Activated CD8-positive, alpha-beta memory T cell treated with anti-CD3 and anti-CD28 coated beads, Interleukin-2, amount 10 ng/mL, durations not matched to agents 7 days and 5 days (primary cell): ENCODE measurements at regions of chr14 and their contacts with region 1.

Region 1: GRCh38 chr14:34722717-34723545 is 8.5 kb upstream of the CFL2 start:
- DNase-seq: peak; percentile 48
- ATAC-seq: no peak
- H3K4me3 Mint-ChIP-seq: no peak overlapping the region
- H3K27ac Mint-ChIP-seq: no peak overlapping the region
- H3K4me1 Mint-ChIP-seq: peaks cover 5% of the 10 kb centered on the region
- H3K27me3 Mint-ChIP-seq: peaks cover 16% of the 10 kb centered on the region

Region 2: GRCh38 chr14:34548472-34548981 is 174.4 kb before region 1 on chr14:
- CTCF ChIA-PET with region 1: no interaction called
- DNase-seq: no peak
- ATAC-seq: no peak
- H3K4me3 Mint-ChIP-seq: no peak overlapping the region
- H3K27ac Mint-ChIP-seq: no peak overlapping the region
- H3K4me1 Mint-ChIP-seq: peaks cover 10% of the 10 kb centered on the region
- H3K27me3 Mint-ChIP-seq: no peaks in the 10 kb centered on the region

Region 3: GRCh38 chr14:34668111-34668510 is 54.8 kb before region 1 on chr14:
- CTCF ChIA-PET with region 1: interaction called, 30 read pairs
- DNase-seq: no peak
- ATAC-seq: no peak
- H3K4me3 Mint-ChIP-seq: no peak overlapping the region
- H3K27ac Mint-ChIP-seq: no peak overlapping the region
- H3K4me1 Mint-ChIP-seq: peaks cover 7% of the 10 kb centered on the region
- H3K27me3 Mint-ChIP-seq: peaks cover 3% of the 10 kb centered on the region

Region 4: DNA sequence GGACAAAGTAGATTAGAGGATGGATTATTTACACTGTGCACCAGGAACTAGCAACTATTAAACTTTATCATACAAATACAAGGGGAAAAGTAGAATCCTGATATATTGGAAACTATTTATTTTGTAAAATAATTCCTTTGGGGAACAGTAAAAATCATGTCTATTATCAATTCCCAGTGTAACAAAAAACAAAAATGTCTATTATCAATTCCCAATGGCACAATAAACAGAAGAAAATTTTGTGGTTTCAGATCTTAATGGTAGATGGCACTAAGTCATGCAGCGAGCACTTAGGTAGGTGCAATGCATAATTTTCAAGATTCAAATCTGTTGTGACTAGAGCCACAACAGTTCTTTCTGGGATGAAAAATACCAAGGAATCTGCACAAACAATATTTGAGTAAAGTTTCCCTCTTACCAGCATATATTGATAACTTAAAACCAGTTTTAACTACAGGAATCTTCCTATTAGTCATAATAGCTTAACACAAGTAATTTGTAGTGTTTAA is 22.3 kb before region 1 on chr14:
- CTCF ChIA-PET with region 1: interaction called, 11 read pairs
- DNase-seq: no peak
- ATAC-seq: no peak
- H3K4me3 Mint-ChIP-seq: no peak overlapping the region
- H3K27ac Mint-ChIP-seq: no peak overlapping the region
- H3K4me1 Mint-ChIP-seq: no peaks in the 10 kb centered on the region
- H3K27me3 Mint-ChIP-seq: no peaks in the 10 kb centered on the region

Region 5: GRCh38 chr14:34707722-34708121 is 15.2 kb before region 1 on chr14:
- CTCF ChIA-PET with region 1: interaction called, 23 read pairs
- DNase-seq: no peak
- ATAC-seq: no peak
- H3K4me3 Mint-ChIP-seq: no peak overlapping the region
- H3K27ac Mint-ChIP-seq: no peak overlapping the region
- H3K4me1 Mint-ChIP-seq: no peaks in the 10 kb centered on the region
- H3K27me3 Mint-ChIP-seq: no peaks in the 10 kb centered on the region

Region 6: GRCh38 chr14:34733235-34733634 is 10.3 kb after region 1 on chr14:
- CTCF ChIA-PET with region 1: interaction called, 20 read pairs
- DNase-seq: no peak
- ATAC-seq: no peak
- H3K4me3 Mint-ChIP-seq: no peak overlapping the region
- H3K27ac Mint-ChIP-seq: no peak overlapping the region
- H3K4me1 Mint-ChIP-seq: no peaks in the 10 kb centered on the region
- H3K27me3 Mint-ChIP-seq: peaks cover 4% of the 10 kb centered on the region

Region 7: DNA sequence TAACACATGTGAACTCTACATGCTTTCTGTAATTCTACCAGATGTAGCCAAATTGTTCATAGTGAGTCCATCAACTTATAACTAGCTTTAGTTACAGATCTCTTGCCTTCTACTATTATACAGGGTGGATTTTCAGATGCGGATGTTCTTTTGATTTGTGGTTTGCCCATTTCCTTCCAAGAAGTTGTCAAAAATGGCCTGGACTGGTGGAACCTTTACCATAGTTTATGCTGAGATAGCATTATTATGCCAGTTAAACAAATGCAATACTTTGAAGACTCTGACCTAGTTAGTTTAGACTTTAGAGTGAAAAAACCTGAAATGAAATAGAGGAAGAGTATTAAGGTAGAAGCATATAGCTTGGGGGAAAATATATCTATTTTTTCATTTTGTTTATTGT is 18.9 kb after region 1 on chr14:
- CTCF ChIA-PET with region 1: interaction called, 11 read pairs
- DNase-seq: no peak
- ATAC-seq: no peak
- H3K4me3 Mint-ChIP-seq: no peak overlapping the region
- H3K27ac Mint-ChIP-seq: no peak overlapping the region
- H3K4me1 Mint-ChIP-seq: peaks cover 10% of the 10 kb centered on the region
- H3K27me3 Mint-ChIP-seq: peaks cover 14% of the 10 kb centered on the region

Region 8: DNA sequence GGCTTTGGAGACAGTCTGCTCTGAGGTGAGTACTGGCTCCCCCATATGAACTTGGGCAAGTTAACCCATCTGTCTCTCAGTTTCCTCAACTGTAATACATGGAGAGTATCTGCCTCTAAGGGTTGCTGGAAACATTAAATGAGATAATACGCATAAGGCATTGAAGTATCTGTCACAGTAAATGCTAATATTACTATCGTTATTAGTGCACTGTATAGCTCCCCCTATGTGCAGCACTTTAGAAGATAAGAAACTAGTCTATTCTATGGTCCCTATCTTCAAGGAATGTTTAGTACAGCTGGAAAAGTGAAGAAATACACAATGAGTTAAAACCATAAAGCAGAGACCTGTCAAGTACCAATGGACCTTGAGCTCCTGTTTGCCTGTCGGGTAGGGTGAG is 43.1 kb after region 1 on chr14:
- CTCF ChIA-PET with region 1: interaction called, 14 read pairs
- DNase-seq: no peak
- ATAC-seq: no peak
- H3K4me3 Mint-ChIP-seq: no peak overlapping the region
- H3K27ac Mint-ChIP-seq: no peak overlapping the region
- H3K4me1 Mint-ChIP-seq: no peaks in the 10 kb centered on the region
- H3K27me3 Mint-ChIP-seq: no peaks in the 10 kb centered on the region